Dorsolateral prefrontal cortex (tissue), 120 donors: ENCODE measurements at regions of chr10 and their contacts with region 1.

Region 1: DNA sequence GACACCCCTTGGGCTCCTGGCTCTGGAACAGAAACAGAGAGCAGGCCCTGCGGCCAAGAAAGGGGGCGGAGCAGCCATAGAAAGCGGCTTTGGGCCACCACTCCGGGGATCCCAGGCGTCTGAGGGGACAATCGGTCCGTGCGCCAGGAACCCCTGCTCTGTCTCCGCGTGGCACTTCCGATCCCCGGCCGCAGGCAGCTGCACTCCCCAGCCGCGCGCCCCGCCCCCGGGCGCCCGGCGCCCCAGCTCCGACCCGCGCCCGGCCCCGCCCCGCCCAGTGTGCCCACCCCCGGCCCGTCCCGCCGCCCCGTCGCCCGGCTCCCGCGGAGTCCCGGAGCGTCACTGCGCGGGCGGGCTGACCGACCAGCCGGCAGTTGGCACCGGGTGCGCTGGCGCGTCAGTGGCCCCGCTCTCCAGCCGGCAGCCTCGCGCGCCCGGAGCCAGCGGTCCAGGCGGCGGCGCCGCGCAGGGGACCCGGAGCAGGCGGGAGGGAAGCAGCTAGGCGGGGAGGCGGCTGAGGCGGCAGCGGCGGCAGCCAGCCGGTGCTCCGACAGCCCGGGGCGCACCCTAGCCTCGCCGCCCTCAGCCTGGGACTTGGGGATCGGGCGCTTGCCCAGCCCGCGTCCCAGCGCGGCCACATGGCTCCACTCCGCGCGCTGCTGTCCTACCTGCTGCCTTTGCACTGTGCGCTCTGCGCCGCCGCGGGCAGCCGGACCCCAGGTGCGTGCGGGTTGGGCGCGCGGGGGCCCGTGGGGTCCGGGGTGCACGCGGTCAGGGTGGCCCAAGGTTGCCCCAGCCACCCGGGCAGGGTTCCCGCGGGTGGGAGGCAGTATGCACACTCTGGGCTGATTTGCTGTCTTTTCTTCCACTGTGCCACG is at the start of gene ADAMTS14:
- DNase-seq: peak; percentile 11 to 85 (median 66)
- H3K4me3 ChIP-seq: peak within 1 kb of the TSS; percentile 22 to 71 (median 58)
- H3K27ac ChIP-seq: peak within 1 kb of the TSS in 58 of 59 donors; percentile 38 to 99 (median 84)
- H3K27me3 ChIP-seq: peaks cover 0 to 10% (median 0%) of the 10 kb centered on the region in 45 donors
- CTCF ChIP-seq: peak in 14 of 56 donors; percentile 1 to 48 (median 12)
- total RNA-seq, gene ADAMTS14: 0.23 to 28.2 (median 3.7) TPM

Region 2: DNA sequence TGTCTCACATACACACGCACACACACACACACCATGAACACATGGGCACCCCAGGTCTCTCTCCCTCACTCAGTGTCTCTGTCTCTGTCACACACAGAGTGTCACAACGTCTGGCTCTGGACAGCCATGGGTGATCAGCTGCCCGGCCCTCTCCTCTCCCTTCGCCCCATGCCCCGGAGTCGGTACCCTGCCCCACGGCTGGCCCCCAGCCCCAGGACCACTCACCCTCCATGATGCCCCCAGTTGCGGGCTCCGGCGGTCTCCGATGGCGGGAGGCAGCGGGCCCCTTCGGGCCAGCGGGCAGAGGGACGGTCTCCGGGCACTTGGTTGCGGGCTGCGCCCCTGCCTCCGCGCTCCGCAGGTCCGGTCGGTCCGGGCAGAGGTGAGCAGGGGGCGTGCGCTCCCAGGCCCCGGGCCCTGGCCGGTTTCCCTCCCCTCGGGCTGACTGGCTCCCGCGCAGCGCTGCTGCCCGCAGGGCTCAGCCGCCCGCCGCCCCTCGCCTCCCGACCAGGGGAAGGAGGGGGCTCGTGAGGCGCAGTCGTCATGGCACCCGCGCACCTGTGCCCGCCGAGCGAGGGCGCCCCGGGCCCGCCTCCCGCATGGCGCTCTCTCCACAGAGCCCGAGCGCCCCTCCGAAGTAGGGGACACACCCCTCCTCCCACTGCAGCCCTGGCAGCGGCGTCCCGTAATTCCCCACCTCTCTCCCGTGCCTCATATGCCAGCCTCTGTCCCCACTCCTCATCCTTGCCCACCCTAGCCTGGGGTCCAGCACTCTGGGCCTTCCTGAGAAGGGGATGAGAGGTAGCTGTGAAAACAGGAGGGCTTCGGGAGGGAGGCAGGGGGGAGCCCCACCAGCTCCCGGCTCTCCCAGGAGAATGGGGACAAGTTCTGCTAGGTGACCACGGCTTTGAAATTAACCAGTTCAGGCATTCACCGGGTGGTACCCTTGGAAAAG is 388.7 kb before region 1 on chr10 and contains the start of gene NPFFR1:
- intact Hi-C with region 1: no loop called
- DNase-seq: no peak
- H3K4me3 ChIP-seq: peak within 1 kb of the TSS; percentile 15 to 63 (median 46)
- H3K27ac ChIP-seq: peak within 1 kb of the TSS in 2 of 59 donors; percentile 28 to 36
- H3K27me3 ChIP-seq: peaks cover 0 to 54% (median 23%) of the 10 kb centered on the region in 45 donors
- CTCF ChIP-seq: no peak
- total RNA-seq, gene NPFFR1: 0.64 to 5.9 (median 2.1) TPM

Region 3: DNA sequence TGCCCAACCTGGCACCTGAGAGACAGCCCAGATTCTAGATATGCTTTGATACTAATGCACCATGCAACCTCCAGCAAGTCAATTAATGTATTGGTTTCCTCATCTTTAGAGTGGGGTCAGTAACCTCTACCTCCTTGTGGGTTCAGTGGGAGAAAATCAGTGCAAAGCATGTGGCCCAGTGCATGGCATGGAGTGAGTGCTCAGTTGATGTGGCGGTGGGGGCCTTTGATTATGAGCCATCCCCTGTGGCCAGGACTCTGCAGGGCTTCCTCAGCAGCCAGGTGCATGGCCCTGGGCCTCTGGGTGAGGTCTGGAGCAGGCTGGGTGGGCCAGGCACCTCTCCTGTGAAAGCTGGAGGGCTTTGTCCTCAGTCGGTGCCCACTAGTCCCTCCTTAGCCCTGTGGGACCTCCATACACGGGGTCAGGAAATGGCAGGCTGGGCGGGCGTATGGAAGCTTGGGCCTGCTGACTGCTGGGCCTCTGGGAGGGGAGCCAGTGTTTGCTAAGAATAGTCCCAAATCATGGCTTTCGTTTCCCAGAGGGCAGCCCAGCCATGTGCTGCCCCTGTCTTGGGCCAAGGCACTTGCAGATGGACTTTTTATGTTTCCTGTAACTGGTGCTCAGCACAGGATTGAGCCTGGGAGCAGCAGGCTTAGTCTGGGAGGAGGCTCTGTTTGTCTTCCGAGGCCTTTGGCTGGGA is 190.4 kb before region 1 on chr10:
- intact Hi-C with region 1: no loop called
- DNase-seq: peak in 1 of 10 donors; percentile 90
- H3K4me3 ChIP-seq: peak overlapping the region in 42 of 59 donors; percentile 2 to 77 (median 66)
- H3K27ac ChIP-seq: peak overlapping the region in 48 of 59 donors; percentile 7 to 88 (median 64)
- H3K27me3 ChIP-seq: peaks cover 0 to 29% (median 0%) of the 10 kb centered on the region in 45 donors
- CTCF ChIP-seq: peak in 1 of 56 donors; percentile 15

Region 4: DNA sequence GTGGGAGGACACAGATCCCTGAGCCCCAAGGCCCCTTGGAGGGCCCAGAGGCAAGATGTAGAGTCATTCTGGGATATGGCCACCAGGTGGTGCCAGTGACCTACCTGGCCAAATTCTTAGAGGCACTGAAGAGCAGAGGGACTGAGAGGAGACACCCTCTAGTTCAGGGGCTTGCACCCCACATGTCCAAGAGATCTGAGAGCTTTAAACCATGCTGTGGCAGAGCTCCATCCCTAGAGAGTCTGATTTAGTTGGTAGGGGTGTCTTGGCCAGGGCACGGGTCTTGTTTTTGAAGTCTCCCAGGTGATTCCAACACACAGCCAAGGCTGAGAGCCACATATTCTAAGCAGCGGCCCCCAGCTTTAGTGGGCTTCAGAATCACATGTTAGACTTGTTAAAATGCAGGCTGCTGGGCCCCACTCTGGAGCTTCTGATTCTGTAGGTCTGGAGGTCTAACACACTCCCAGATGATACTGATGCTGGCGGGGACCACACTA is 122.4 kb before region 1 on chr10:
- intact Hi-C with region 1: loop called (anchors 5 kb)
- DNase-seq: peak; percentile 57 to 79 (median 64)
- H3K4me3 ChIP-seq: no peak overlapping the region
- H3K27ac ChIP-seq: peak overlapping the region in 1 of 59 donors; percentile 58
- H3K27me3 ChIP-seq: no peaks in the 10 kb centered on the region
- CTCF ChIP-seq: peak; percentile 82 to 97 (median 93)

Region 5: DNA sequence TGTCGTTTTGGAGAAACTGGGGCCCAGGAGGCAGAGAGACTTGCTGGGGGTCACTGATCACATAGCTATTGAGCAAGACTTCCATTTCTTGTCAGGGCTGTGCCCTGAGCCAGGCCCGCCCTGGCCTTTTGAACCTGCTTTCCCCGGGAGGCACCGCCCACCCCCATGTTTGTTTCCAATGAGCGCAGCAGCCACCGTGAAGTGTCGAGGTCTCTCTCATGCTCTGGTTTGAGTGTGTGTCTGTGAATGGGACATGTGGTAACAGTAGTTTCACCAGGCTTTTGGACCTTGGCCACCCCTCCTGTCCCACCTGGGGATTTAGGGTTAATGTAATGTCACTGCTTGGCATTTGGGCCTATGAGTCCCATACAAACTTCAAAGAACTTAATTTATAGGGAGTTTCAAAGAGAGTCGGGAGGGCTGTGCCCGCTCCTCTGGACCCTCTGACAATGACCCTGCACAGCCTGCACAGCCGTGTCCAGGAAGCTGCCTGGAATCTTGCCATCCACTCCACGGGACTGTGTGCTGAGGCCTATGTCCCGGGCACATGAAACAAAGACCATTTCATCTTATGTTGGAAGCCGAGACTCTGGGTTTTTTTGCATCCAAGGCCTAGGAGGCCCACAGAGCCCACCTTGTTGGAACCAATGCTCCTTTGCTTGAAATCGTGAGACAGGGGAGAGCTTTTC is 76.2 kb before region 1 on chr10:
- intact Hi-C with region 1: loop called in 1 of 2 experiments (anchors 5 kb)
- DNase-seq: peak in 9 of 10 donors; percentile 56 to 86 (median 70)
- H3K4me3 ChIP-seq: no peak overlapping the region
- H3K27ac ChIP-seq: peak overlapping the region in 2 of 59 donors; percentile 29 to 30
- H3K27me3 ChIP-seq: no peaks in the 10 kb centered on the region
- CTCF ChIP-seq: peak in 1 of 56 donors; percentile 32

Region 6: GRCh38 chr10:70729763-70730352 is 57.5 kb after region 1 on chr10:
- intact Hi-C with region 1: loop called (anchors 5 kb)
- DNase-seq: peak in 3 of 10 donors; percentile 20 to 43 (median 23)
- H3K4me3 ChIP-seq: no peak overlapping the region
- H3K27ac ChIP-seq: no peak overlapping the region
- H3K27me3 ChIP-seq: no peaks in the 10 kb centered on the region
- CTCF ChIP-seq: no peak